ENCODE measurements at regions of chr7 and their contacts with region 1.

Region 1: DNA sequence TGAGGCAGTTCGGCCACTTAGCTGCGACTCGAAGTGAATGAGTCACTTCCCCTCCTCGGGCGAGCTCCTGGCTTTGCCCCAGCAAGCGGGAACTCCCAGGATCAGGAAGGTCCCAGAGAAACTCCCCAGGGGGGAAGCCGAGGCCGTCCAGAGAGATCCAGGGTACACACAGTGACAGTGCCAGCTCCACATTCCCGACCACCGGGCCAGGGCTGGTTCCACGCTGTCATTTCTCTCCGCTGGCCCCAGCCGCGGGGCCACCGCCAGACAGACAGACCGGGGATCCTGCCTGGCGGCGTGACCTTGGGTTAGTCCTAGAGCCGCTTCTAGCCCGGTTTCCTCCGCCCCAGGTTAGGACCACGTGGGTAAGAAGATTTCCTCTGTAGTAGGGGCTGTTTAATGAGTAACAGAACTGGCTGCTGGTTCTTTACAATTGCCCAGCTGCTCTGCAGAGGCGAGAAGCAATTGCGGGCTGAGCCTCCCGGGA is 463 bp upstream of the UPP1 start:
- DNase-seq: peak; percentile 84 to 98
- H3K4me3 ChIP-seq: peak overlapping the region; percentile 68
- H3K4me3 Mint-ChIP-seq: peak overlapping the region; percentile 85
- H3K27ac Mint-ChIP-seq: peak overlapping the region; percentile 94
- H3K4me1 ChIP-seq: peaks cover 34% of the 10 kb centered on the region
- H3K4me1 Mint-ChIP-seq: peaks cover 26% of the 10 kb centered on the region
- H3K27me3 ChIP-seq: no peaks in the 10 kb centered on the region
- H3K27me3 Mint-ChIP-seq: no peaks in the 10 kb centered on the region
- CTCF ChIP-seq: no peak

Region 2: DNA sequence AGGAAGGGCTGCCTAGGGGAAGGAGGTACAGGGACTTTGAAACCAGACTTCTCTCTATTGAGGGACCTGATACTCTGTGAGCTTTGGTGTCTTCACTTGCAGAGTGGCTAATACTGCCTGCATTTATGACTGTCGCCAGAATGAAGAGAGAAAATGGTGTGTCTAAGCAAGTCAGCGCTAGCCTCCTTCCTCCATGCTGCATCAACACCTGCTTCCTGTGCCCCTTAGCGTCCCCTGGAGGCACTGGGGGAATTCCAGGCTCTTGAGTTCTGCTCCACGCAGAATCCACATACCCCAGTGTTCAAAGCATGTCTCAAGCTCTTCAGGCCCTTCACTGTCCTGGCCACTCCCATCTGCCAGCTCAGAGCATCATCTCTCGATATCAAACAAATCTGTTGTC is 280.8 kb before region 1 on chr7:
- CTCF ChIA-PET with region 1: no interaction called
- POLR2A ChIA-PET with region 1: no interaction called
- intact Hi-C with region 1: no loop called
- DNase-seq: no peak
- H3K4me3 ChIP-seq: no peak overlapping the region
- H3K4me3 Mint-ChIP-seq: no peak overlapping the region
- H3K27ac Mint-ChIP-seq: peak overlapping the region; percentile 50
- H3K4me1 ChIP-seq: peaks cover 39% of the 10 kb centered on the region
- H3K4me1 Mint-ChIP-seq: peaks cover 29% of the 10 kb centered on the region
- H3K27me3 ChIP-seq: no peaks in the 10 kb centered on the region
- H3K27me3 Mint-ChIP-seq: no peaks in the 10 kb centered on the region
- CTCF ChIP-seq: peak in 1 of 2 experiments; percentile 2

Region 3: GRCh38 chr7:47979145-47979831 is 109.3 kb before region 1 on chr7 and contains the start of gene HUS1:
- CTCF ChIA-PET with region 1: no interaction called
- POLR2A ChIA-PET with region 1: interaction called, 5 read pairs
- intact Hi-C with region 1: loop called (anchors 2 kb)
- DNase-seq: peak; percentile 93 to 94
- H3K4me3 ChIP-seq: peak within 1 kb of the TSS; percentile 87
- H3K4me3 Mint-ChIP-seq: peak within 1 kb of the TSS; percentile 81
- H3K27ac Mint-ChIP-seq: peak within 1 kb of the TSS; percentile 90
- H3K4me1 ChIP-seq: peaks cover 5% of the 10 kb centered on the region
- H3K4me1 Mint-ChIP-seq: peaks cover 18% of the 10 kb centered on the region
- H3K27me3 ChIP-seq: no peaks in the 10 kb centered on the region
- H3K27me3 Mint-ChIP-seq: no peaks in the 10 kb centered on the region
- CTCF ChIP-seq: no peak
- total RNA-seq, gene HUS1: 31.3 and 32.3 TPM in 2 replicates

Region 4: DNA sequence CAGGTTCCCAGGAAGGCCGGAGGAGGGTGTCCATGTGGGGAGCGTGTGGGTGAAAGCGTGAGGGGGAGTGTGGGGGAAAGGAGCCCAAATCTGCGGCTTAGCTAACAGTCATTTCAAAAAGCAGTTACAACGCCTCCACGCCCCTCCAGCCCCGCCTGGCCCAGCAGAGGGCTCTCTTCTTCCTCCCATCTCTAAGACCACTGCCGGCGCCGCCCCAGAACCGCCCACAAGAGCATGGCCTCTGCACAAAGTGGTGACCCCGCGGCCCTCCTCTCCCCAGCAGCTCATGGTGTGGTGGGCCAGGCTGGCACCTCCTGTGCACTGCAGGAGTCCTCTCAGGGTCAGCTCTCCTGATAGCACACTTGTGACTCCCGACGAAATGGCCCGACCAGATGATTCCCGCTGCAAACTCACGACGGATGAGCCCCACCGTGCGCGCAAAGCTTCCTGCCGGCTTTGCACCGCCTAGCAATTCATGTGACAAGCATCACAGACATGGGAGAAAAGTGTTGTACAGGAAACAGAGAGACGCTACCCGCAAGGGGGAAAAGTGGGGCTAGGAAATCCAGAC is 96.8 kb before region 1 on chr7:
- CTCF ChIA-PET with region 1: interaction called, 15 read pairs
- POLR2A ChIA-PET with region 1: interaction called, 3 read pairs
- intact Hi-C with region 1: loop called (anchors 1 kb)
- DNase-seq: peak; percentile 88 to 90
- H3K4me3 ChIP-seq: peak overlapping the region; percentile 51
- H3K4me3 Mint-ChIP-seq: peak overlapping the region; percentile 85
- H3K27ac Mint-ChIP-seq: peak overlapping the region; percentile 68
- H3K4me1 ChIP-seq: peaks cover 23% of the 10 kb centered on the region
- H3K4me1 Mint-ChIP-seq: peaks cover 25% of the 10 kb centered on the region
- H3K27me3 ChIP-seq: no peaks in the 10 kb centered on the region
- H3K27me3 Mint-ChIP-seq: no peaks in the 10 kb centered on the region
- CTCF ChIP-seq: peak; percentile 72 to 82

Region 5: DNA sequence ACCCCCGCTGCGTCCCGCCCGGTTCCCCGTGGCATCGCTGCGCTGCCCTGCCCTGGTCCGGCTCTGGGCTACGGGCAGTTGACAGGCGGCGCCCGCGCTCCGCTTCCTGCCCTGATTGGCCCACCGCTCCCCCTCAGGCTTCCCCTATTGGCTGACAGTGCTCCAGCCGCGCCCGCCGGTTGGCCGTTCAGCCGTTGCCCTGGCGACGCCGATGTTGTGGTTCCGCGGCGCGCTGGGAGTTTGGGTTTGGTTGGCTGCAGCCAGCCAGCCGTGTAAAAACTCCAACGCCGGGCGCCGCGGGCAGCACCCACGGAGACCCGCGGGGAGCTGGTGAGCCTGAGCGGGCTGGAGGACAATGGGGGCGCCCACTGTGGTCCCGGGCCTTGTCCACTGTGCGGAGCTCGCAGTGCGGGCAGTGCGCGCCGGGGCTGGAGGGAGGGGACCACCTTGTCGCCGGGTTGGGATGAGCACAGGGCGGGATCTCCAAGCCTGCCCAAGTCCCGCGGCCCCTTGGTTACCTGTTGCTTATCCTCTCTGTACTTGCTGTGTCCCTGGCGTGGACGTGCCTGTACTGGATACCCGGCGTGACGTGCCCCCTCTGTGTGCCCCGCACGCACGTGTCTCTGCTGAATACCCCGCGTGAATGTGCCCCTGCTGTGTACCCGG is 53.2 kb before region 1 on chr7 and contains the start of gene C7orf57:
- CTCF ChIA-PET with region 1: interaction called, 3 read pairs
- POLR2A ChIA-PET with region 1: no interaction called
- intact Hi-C with region 1: loop called (anchors 1 kb)
- DNase-seq: peak; percentile 91 to 94
- H3K4me3 ChIP-seq: peak within 1 kb of the TSS; percentile 50
- H3K4me3 Mint-ChIP-seq: peak within 1 kb of the TSS; percentile 78
- H3K27ac Mint-ChIP-seq: peak within 1 kb of the TSS; percentile 84
- H3K4me1 ChIP-seq: peaks cover 5% of the 10 kb centered on the region
- H3K4me1 Mint-ChIP-seq: peaks cover 7% of the 10 kb centered on the region
- H3K27me3 ChIP-seq: peaks cover 5% of the 10 kb centered on the region
- H3K27me3 Mint-ChIP-seq: peaks cover 37% of the 10 kb centered on the region
- CTCF ChIP-seq: peak in 1 of 2 experiments; percentile 36
- total RNA-seq, gene C7orf57: not detected in 2 replicates

Region 6: GRCh38 chr7:48052748-48053147 is 35.9 kb before region 1 on chr7:
- CTCF ChIA-PET with region 1: no interaction called
- POLR2A ChIA-PET with region 1: no interaction called
- intact Hi-C with region 1: loop called (anchors 2 kb)
- DNase-seq: no peak
- H3K4me3 ChIP-seq: no peak overlapping the region
- H3K4me3 Mint-ChIP-seq: no peak overlapping the region
- H3K27ac Mint-ChIP-seq: no peak overlapping the region
- H3K4me1 ChIP-seq: peaks cover 11% of the 10 kb centered on the region
- H3K4me1 Mint-ChIP-seq: no peaks in the 10 kb centered on the region
- H3K27me3 ChIP-seq: no peaks in the 10 kb centered on the region
- H3K27me3 Mint-ChIP-seq: peaks cover 3% of the 10 kb centered on the region
- CTCF ChIP-seq: no peak

Region 7: GRCh38 chr7:48154792-48155413 is 66.3 kb after region 1 on chr7:
- CTCF ChIA-PET with region 1: interaction called, 5 read pairs
- POLR2A ChIA-PET with region 1: no interaction called
- intact Hi-C with region 1: loop called (anchors 2 kb)
- DNase-seq: peak; percentile 48 to 70
- H3K4me3 ChIP-seq: no peak overlapping the region
- H3K4me3 Mint-ChIP-seq: no peak overlapping the region
- H3K27ac Mint-ChIP-seq: no peak overlapping the region
- H3K4me1 ChIP-seq: no peaks in the 10 kb centered on the region
- H3K4me1 Mint-ChIP-seq: peaks cover 6% of the 10 kb centered on the region
- H3K27me3 ChIP-seq: no peaks in the 10 kb centered on the region
- H3K27me3 Mint-ChIP-seq: peaks cover 17% of the 10 kb centered on the region
- CTCF ChIP-seq: peak; percentile 68 to 81

Measured in Caco-2 (cell line).